Esophagus muscularis mucosa (tissue), 4 donors: ENCODE measurements at regions of chr9 and their contacts with region 1.

Region 1: GRCh38 chr9:99259231-99259918 is 37.3 kb downstream of the SEC61B start:
- DNase-seq: peak; percentile 94
- H3K4me3 ChIP-seq: peak overlapping the region; percentile 46 to 57 (median 52)
- H3K27ac ChIP-seq: peak overlapping the region; percentile 68 to 81 (median 70)
- H3K4me1 ChIP-seq: peaks cover 13 to 30% (median 28%) of the 10 kb centered on the region in 4 donors
- H3K27me3 ChIP-seq: no peaks in the 10 kb centered on the region
- CTCF ChIP-seq: no peak
- EP300 ChIP-seq: no peak
- POLR2A ChIP-seq: peak; percentile 14

Region 2: GRCh38 chr9:99221621-99222415 is 37.6 kb before region 1 on chr9 and contains the starts of genes ALG2 and SEC61B:
- intact Hi-C with region 1: loop called (anchors 5 kb)
- DNase-seq: peak; percentile 97
- H3K4me3 ChIP-seq: peak within 1 kb of the TSS; percentile 77 to 88 (median 83)
- H3K27ac ChIP-seq: peak within 1 kb of the TSS; percentile 87 to 93 (median 90)
- H3K4me1 ChIP-seq: peaks cover 67 to 78% (median 71%) of the 10 kb centered on the region in 4 donors
- H3K27me3 ChIP-seq: no peaks in the 10 kb centered on the region
- CTCF ChIP-seq: peak in 1 of 3 experiments; percentile 6
- EP300 ChIP-seq: no peak
- POLR2A ChIP-seq: peak; percentile 92
- total RNA-seq, gene ALG2: 19.5 to 33.4 (median 26.2) TPM
- total RNA-seq, gene SEC61B: 53.6 to 67.9 (median 62.9) TPM